Activated CD4-positive, alpha-beta T cell treated with anti-CD3 and anti-CD28 coated beads for 36 hours (primary cell): ENCODE measurements at regions of chr12 and their contacts with region 1.

Region 1: GRCh38 chr12:6851921-6852650 is at the start of gene USP5:
- DNase-seq: peak; percentile 99
- ATAC-seq: peak; percentile 80
- H3K4me3 Mint-ChIP-seq: peak within 1 kb of the TSS; percentile 93
- H3K27ac Mint-ChIP-seq: peak within 1 kb of the TSS; percentile 99
- H3K4me1 Mint-ChIP-seq: peaks cover 21% of the 10 kb centered on the region
- H3K27me3 Mint-ChIP-seq: no peaks in the 10 kb centered on the region
- total RNA-seq, gene USP5: 128 to 132 TPM

Region 2: GRCh38 chr12:6533923-6534694 is 318.0 kb before region 1 on chr12 and contains the start of gene GAPDH:
- CTCF ChIA-PET with region 1: interaction called, 6 read pairs
- POLR2A ChIA-PET with region 1: interaction called, 8 read pairs
- intact Hi-C with region 1: loop called in 1 of 2 experiments (anchors 1 kb)
- DNase-seq: peak; percentile 95
- ATAC-seq: peak; percentile 53
- H3K4me3 Mint-ChIP-seq: peak within 1 kb of the TSS; percentile 98
- H3K27ac Mint-ChIP-seq: peak within 1 kb of the TSS; percentile 100
- H3K4me1 Mint-ChIP-seq: peaks cover 37% of the 10 kb centered on the region
- H3K27me3 Mint-ChIP-seq: no peaks in the 10 kb centered on the region
- total RNA-seq, gene GAPDH: 7,289 to 9,770 TPM

Region 3: DNA sequence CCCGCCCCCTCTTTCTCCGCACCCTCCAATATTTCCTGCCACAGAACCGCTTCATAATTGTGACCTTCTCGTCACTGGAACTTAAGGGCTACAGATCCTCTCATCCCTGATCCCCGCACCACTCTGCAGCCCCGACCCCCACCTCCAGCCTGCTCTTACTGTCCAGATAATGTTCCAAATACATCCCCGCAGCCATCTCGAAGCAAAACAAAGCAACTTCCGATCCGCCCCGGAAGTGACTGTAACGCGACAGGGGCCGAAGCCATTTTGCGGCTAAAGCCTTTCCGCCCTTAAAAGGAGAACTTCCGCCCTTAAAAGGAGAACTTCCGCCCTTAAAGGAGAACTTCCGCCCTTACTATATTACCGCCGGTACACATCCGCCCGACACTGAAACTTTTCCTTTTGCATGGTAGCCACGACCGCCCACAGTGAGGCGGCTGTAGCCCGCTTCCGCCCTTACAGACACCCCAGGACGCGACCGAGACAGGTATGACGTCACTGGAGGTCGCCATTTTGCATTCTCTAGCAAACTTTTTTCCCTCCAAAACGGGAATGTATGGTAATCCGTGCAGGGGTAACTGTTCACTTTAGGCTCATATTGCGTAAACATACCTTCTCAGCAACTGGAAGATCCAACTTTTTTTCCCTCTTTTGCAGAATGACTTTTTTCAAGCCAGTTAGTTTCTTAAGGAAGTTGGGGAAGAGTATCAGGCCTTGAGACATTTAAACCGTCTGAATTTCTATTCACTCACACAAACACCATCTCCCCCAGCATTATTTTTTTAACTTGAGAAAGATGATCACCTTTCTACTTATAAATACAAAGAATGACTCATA is 189.0 kb before region 1 on chr12 and contains the start of gene ING4:
- CTCF ChIA-PET with region 1: interaction called, 5 read pairs
- POLR2A ChIA-PET with region 1: no interaction called
- intact Hi-C with region 1: loop called (anchors 1 kb)
- DNase-seq: peak; percentile 98
- ATAC-seq: peak; percentile 98
- H3K4me3 Mint-ChIP-seq: peak within 1 kb of the TSS; percentile 84
- H3K27ac Mint-ChIP-seq: peak within 1 kb of the TSS; percentile 91
- H3K4me1 Mint-ChIP-seq: peaks cover 24% of the 10 kb centered on the region
- H3K27me3 Mint-ChIP-seq: no peaks in the 10 kb centered on the region
- total RNA-seq, gene ING4: 14.9 to 17.6 TPM

Region 4: GRCh38 chr12:6833189-6833890 is 18.7 kb before region 1 on chr12:
- CTCF ChIA-PET with region 1: interaction called, 27 read pairs
- POLR2A ChIA-PET with region 1: no interaction called
- intact Hi-C with region 1: no loop called
- DNase-seq: no peak
- ATAC-seq: no peak
- H3K4me3 Mint-ChIP-seq: no peak overlapping the region
- H3K27ac Mint-ChIP-seq: no peak overlapping the region
- H3K4me1 Mint-ChIP-seq: peaks cover 13% of the 10 kb centered on the region
- H3K27me3 Mint-ChIP-seq: peaks cover 7% of the 10 kb centered on the region

Region 5: GRCh38 chr12:6890789-6891645 is 38.9 kb after region 1 on chr12:
- CTCF ChIA-PET with region 1: interaction called, 12 read pairs
- POLR2A ChIA-PET with region 1: no interaction called
- intact Hi-C with region 1: loop called (anchors 1 to 2 kb)
- DNase-seq: peak; percentile 100
- ATAC-seq: peak; percentile 94
- H3K4me3 Mint-ChIP-seq: peak overlapping the region; percentile 87
- H3K27ac Mint-ChIP-seq: peak overlapping the region; percentile 94
- H3K4me1 Mint-ChIP-seq: peaks cover 12% of the 10 kb centered on the region
- H3K27me3 Mint-ChIP-seq: no peaks in the 10 kb centered on the region

Region 6: DNA sequence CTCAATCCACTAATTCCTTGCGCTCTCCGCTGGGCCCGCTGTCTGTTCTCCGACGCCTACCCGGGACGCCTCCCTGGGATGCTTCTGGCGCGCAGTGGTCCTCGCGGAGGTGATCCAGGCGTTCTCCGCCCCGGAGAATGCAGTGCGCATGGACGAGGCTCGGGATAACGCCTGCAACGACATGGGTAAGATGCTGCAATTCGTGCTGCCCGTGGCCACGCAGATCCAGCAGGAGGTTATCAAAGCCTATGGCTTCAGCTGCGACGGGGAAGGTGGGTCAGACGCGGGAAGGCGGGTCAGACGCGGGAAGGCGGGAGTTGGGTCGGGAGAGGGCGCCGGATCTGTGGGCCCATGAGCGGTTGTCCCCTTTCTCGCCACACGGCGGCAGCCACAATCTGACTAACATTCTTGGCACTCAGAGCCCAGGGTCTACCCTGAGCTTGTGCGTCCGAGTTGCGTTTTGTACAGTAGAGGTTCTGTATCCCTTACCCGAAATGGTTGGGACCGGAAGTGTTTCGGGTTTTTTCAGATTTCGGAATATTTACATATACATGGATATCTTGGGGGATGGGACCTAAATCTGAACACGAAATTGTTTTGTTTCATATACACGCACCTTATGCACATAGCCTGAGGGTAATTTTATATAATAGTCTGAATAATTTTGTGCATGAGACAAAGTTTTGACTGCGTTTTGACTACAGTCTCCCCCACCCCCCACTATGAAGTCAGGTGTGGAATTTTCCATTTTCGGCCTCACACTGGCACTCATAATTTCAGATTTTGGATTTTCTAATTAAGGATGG is 92.5 kb after region 1 on chr12:
- CTCF ChIA-PET with region 1: interaction called, 4 read pairs
- POLR2A ChIA-PET with region 1: interaction called, 39 read pairs
- intact Hi-C with region 1: loop called in 1 of 2 experiments (anchors 5 kb)
- DNase-seq: peak; percentile 94
- ATAC-seq: peak; percentile 54
- H3K4me3 Mint-ChIP-seq: peak overlapping the region; percentile 81
- H3K27ac Mint-ChIP-seq: peak overlapping the region; percentile 97
- H3K4me1 Mint-ChIP-seq: peaks cover 59% of the 10 kb centered on the region
- H3K27me3 Mint-ChIP-seq: no peaks in the 10 kb centered on the region

Region 7: GRCh38 chr12:7542813-7543498 is 690.9 kb after region 1 on chr12:
- CTCF ChIA-PET with region 1: no interaction called
- POLR2A ChIA-PET with region 1: no interaction called
- intact Hi-C with region 1: no loop called
- DNase-seq: no peak
- ATAC-seq: no peak
- H3K4me3 Mint-ChIP-seq: no peak overlapping the region
- H3K27ac Mint-ChIP-seq: no peak overlapping the region
- H3K4me1 Mint-ChIP-seq: no peaks in the 10 kb centered on the region
- H3K27me3 Mint-ChIP-seq: peaks cover 25% of the 10 kb centered on the region